HEK293T (cell line): ENCODE measurements at regions of chr7 and their contacts with region 1.

Region 1: GRCh38 chr7:141737834-141738591 is at the start of gene SSBP1:
- DNase-seq: peak; percentile 94

Region 2: GRCh38 chr7:141654551-141654950 is 83.5 kb before region 1 on chr7:
- CTCF ChIA-PET with region 1: interaction called, 18 read pairs
- POLR2A ChIA-PET with region 1: interaction called, 18 read pairs
- DNase-seq: peak; percentile 83

Region 3: GRCh38 chr7:141701489-141702046 is 36.4 kb before region 1 on chr7:
- CTCF ChIA-PET with region 1: interaction called, 7 read pairs
- POLR2A ChIA-PET with region 1: interaction called, 26 read pairs
- DNase-seq: peak; percentile 76

Region 4: GRCh38 chr7:141710301-141710700 is 27.7 kb before region 1 on chr7:
- CTCF ChIA-PET with region 1: interaction called, 11 read pairs
- POLR2A ChIA-PET with region 1: interaction called, 13 read pairs
- DNase-seq: no peak

Region 5: GRCh38 chr7:141715794-141716689 is 22.0 kb before region 1 on chr7:
- CTCF ChIA-PET with region 1: interaction called, 11 read pairs
- POLR2A ChIA-PET with region 1: interaction called, 11 read pairs
- DNase-seq: no peak

Region 6: GRCh38 chr7:141763797-141764196 is 25.8 kb after region 1 on chr7 and contains the start of gene TAS2R3:
- CTCF ChIA-PET with region 1: no interaction called
- POLR2A ChIA-PET with region 1: interaction called, 10 read pairs
- DNase-seq: no peak